Left lung (tissue), 14 donors: ENCODE measurements at regions of chr6 and their contacts with region 1.

Region 1: GRCh38 chr6:138824482-138825144 is 28.7 kb downstream of the ECT2L start:
- DNase-seq: no peak
- ATAC-seq: no peak
- H3K4me3 ChIP-seq: no peak overlapping the region
- H3K27ac ChIP-seq: no peak overlapping the region
- H3K4me1 ChIP-seq: no peaks in the 10 kb centered on the region
- H3K27me3 ChIP-seq: no peaks in the 10 kb centered on the region
- CTCF ChIP-seq: no peak

Region 2: GRCh38 chr6:138987640-138988468 is 163.2 kb after region 1 on chr6 and contains the start of gene REPS1:
- intact Hi-C with region 1: loop called in 1 of 2 experiments (anchors 5 kb)
- DNase-seq: peak; percentile 87 to 99 (median 94)
- ATAC-seq: peak; percentile 97
- H3K4me3 ChIP-seq: peak within 1 kb of the TSS; percentile 76 to 96
- H3K27ac ChIP-seq: peak within 1 kb of the TSS; percentile 88 to 93
- H3K4me1 ChIP-seq: peaks cover 10 to 45% of the 10 kb centered on the region in 2 donors
- H3K27me3 ChIP-seq: no peaks in the 10 kb centered on the region
- CTCF ChIP-seq: peak; percentile 97 to 99
- polyA plus RNA-seq, gene REPS1: 58.8 to 83.9 (median 64.6) TPM

Region 3: GRCh38 chr6:139230391-139230840 is 405.8 kb after region 1 on chr6:
- intact Hi-C with region 1: no loop called
- DNase-seq: no peak
- ATAC-seq: peak; percentile 16
- H3K4me3 ChIP-seq: no peak overlapping the region
- H3K27ac ChIP-seq: no peak overlapping the region
- H3K4me1 ChIP-seq: no peaks in the 10 kb centered on the region
- H3K27me3 ChIP-seq: no peaks in the 10 kb centered on the region
- CTCF ChIP-seq: no peak